BJ (cell line): ENCODE measurements at regions of chr9 and their contacts with region 1.

Region 1: DNA sequence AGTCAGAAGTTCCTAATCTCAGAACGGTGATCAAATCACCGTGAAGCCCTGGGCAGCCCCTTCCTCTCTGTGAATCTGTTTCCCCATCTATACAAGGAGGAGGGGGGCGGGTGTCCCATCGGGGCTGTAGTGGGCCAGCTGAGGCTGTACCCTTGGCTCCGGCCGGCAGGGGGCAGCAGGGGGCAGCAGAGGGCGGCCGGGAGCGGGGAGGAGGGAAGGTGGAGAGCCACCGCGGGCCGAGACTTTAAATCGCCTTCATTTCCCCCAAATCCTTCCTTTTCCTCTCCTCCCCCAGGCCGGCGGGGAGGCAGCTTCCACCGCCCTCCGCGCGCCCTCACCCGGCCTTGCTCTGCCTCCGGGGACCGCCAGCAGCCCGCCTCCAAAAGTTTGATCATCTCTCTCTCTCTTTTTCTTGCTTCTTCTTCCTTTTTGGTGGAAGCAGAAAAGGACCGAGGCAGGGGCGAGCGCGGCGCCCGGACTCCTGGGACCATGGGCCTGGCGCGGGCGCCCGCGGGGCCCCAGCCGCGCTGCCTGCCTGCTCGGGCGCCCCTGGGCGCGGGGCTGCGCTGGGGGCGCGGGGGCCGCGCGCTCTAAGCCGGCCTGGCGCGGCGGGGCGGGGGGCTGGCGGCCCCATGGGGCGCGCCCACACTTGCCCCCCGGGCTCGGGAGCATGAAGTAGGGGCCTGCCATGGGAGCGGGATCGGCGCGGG is at the start of gene COL27A1:
- DNase-seq: no peak
- H3K4me3 ChIP-seq: peak within 1 kb of the TSS; percentile 66
- H3K27me3 ChIP-seq: peaks cover 12% of the 10 kb centered on the region
- CTCF ChIP-seq: peak; percentile 94
- polyA plus RNA-seq, gene COL27A1: 11.6 and 16.6 TPM in 2 replicates

Region 2: GRCh38 chr9:113868501-113868900 is 286.9 kb before region 1 on chr9:
- CTCF ChIA-PET with region 1: no interaction called
- POLR2A ChIA-PET with region 1: no interaction called
- DNase-seq: no peak
- H3K4me3 ChIP-seq: no peak overlapping the region
- H3K27me3 ChIP-seq: peaks cover 8% of the 10 kb centered on the region
- CTCF ChIP-seq: no peak

Region 3: DNA sequence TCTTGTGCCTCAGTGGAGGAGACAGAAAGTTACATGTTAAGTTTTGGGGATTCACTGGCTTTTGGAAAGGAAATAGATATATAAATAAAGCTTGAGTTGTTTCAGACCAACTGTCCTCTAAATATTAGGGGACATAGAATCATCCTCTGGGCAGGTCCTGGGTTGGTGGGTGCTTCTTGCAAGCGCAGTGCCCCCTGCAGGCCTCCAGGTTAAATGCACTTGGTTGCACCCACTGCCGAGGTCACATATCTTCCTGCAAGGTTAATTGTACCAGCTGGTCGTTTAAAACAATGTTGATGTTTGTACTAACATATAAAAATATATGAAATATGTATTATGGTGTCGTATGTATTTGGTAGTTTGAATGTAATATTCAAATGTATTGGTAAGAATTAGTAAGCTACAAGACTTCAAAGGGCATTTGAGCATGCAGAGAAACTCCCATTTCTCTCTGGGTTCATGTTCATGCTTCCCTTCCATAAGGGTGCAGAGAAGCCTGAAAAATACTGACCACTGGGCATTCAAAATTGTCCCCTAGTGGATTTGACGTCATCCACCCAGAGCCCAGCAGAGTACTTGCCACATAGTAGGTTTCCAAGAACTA is 192.3 kb before region 1 on chr9:
- CTCF ChIA-PET with region 1: no interaction called
- POLR2A ChIA-PET with region 1: no interaction called
- DNase-seq: no peak
- H3K4me3 ChIP-seq: no peak overlapping the region
- H3K27me3 ChIP-seq: no peaks in the 10 kb centered on the region
- CTCF ChIP-seq: peak; percentile 81

Region 4: DNA sequence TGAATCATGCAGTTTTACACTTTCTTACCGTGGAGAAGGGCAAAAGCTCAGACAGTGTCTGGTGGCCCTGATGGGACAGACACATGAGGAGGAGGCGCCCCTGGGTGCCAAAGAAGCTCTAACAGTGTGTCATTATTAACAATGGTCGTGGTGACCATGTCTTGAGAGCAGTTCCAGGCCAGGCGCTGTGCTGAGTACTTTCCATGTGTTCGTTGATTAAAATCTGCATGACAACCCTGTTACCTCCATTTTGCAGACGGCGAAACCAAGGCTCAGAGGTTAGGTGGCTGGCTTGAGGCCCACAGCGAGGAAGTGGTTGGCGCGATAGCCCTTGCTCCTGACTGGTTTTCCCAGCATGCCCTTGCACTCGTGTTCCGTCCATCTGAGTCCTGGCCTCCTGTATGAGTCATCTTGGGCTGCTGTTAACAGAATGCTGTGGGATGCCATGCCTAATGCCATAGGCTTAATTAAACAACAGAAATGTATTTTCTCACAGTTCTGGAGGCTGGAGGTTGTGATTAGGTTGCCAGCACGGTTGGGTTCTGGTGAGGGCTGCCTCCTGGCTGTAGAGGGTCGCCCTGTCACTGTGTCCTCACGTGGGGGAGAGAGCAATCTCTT is 169.3 kb before region 1 on chr9:
- CTCF ChIA-PET with region 1: no interaction called
- POLR2A ChIA-PET with region 1: no interaction called
- DNase-seq: no peak
- H3K4me3 ChIP-seq: no peak overlapping the region
- H3K27me3 ChIP-seq: no peaks in the 10 kb centered on the region
- CTCF ChIP-seq: no peak

Region 5: DNA sequence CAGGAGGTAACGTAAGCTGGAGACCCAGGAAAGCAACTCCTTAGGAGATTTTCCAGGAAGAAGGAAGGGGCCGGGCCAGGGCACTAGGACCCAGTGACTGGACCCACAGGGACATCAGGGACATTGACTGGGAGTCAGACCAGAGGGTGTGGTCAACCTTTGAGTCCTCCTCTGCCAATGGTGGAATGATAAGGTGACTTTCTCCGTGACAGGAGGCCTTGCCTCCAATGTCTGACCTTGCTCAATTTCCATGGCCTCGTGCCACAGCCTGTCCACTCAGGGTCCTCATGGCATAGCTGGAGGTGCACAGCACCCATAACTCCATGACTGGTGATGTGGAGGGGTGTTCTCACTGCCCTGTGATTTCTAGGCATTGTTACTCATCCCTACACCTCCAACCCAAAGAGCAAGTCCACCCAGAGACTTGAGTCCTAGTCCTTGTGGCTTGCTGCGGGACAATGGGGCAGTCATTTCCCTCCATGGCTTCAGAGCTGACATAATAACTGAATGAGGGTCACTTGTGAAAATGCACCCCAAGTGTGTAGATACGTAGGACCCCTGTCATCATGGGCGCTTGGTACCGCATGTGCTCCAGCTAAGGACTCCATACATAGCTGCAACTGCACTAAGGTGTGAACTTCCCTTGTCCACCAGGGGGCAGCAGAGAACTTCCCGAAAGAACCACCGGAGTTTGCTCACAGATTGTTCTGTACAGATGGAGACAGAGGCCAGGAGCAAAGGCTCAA is 73.2 kb before region 1 on chr9:
- CTCF ChIA-PET with region 1: interaction called, 19 read pairs
- POLR2A ChIA-PET with region 1: no interaction called
- DNase-seq: peak; percentile 24
- H3K4me3 ChIP-seq: no peak overlapping the region
- H3K27me3 ChIP-seq: peaks cover 4% of the 10 kb centered on the region
- CTCF ChIP-seq: peak; percentile 90

Region 6: GRCh38 chr9:114169029-114169951 is 13.9 kb after region 1 on chr9:
- CTCF ChIA-PET with region 1: interaction called, 42 read pairs
- POLR2A ChIA-PET with region 1: no interaction called
- DNase-seq: no peak
- H3K4me3 ChIP-seq: no peak overlapping the region
- H3K27me3 ChIP-seq: no peaks in the 10 kb centered on the region
- CTCF ChIP-seq: no peak

Region 7: GRCh38 chr9:114263853-114264510 is 108.6 kb after region 1 on chr9:
- CTCF ChIA-PET with region 1: interaction called, 17 read pairs
- POLR2A ChIA-PET with region 1: no interaction called
- DNase-seq: no peak
- H3K4me3 ChIP-seq: no peak overlapping the region
- H3K27me3 ChIP-seq: no peaks in the 10 kb centered on the region
- CTCF ChIP-seq: peak; percentile 37; the same call in 1 of the 2 replicates

Region 8: DNA sequence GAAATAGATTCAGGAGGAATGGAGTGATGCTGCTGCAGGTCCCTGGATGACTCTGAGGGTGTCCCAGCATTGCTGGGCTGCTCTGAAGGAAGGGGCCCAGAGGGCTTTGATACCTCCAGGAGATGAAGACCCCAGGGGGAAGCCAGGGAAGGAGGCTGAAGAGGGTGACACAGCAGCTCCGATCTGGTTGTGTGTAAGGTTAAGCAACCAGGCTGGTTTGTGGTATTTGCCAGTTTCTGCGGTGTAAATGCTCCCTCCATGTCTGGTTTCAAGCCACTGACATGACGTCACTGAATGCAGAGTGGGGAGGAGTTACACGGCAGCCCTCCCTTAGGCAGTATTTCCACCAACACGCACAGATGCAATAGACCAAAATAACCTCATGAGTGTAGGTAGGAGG is 127.5 kb after region 1 on chr9:
- CTCF ChIA-PET with region 1: interaction called, 47 read pairs
- POLR2A ChIA-PET with region 1: no interaction called
- DNase-seq: peak; percentile 73
- H3K4me3 ChIP-seq: no peak overlapping the region
- H3K27me3 ChIP-seq: no peaks in the 10 kb centered on the region
- CTCF ChIP-seq: no peak

Region 9: DNA sequence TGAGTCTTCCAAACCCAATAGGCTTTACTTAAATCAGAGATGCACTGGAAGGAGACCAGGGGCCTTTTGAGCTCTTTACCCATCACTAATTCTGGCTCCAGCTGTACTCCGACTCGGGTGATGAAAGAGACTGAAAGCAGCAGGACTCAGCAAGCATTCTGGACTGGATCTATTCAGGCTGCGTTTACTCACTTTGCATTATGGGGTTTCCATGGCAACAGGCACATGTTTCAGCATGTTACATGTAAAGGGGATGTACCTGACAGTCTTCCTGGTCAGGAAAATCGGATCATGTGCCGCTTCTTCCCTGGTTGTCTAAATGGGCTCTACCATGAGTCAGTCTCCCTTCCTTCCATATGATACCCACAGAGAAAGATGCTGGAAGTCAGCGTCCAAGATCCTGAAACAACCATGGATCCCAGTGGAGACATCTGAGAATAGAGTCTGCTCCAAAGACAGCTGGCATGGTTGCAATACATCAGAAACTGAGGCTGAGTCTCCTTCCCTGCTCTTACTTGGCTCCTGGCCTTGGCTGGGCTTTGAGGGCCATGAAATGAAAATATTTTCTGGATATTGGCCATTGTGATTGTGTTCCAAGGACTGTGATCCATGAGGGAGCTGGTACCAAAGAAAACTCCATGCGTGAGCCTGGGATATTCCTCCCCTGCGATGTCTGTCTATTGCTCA is 1065.0 kb after region 1 on chr9:
- CTCF ChIA-PET with region 1: no interaction called
- POLR2A ChIA-PET with region 1: no interaction called
- DNase-seq: no peak
- H3K4me3 ChIP-seq: no peak overlapping the region
- H3K27me3 ChIP-seq: no peaks in the 10 kb centered on the region
- CTCF ChIP-seq: no peak